ENCODE measurements at regions of chr22 and their contacts with region 1.

Region 1: GRCh38 chr22:46178760-46179505 is 28.6 kb downstream of the PPARA start:
- DNase-seq: no peak
- ATAC-seq: 0 out of 2 replicates have a peak, but pooled peaks have one; percentile 19
- H3K4me3 ChIP-seq: no peak overlapping the region
- H3K27ac ChIP-seq: no peak overlapping the region
- H3K4me1 ChIP-seq: peaks cover 5% of the 10 kb centered on the region
- H3K27me3 ChIP-seq: no peaks in the 10 kb centered on the region
- CTCF ChIP-seq: no peak
- POLR2A ChIP-seq: no peak
- RAD21 ChIP-seq: no peak

Region 2: GRCh38 chr22:45816776-45817175 is 362.2 kb before region 1 on chr22:
- CTCF ChIA-PET with region 1: no interaction called
- POLR2A ChIA-PET with region 1: interaction called, 14 read pairs
- dilution Hi-C with region 1: no loop called
- in situ Hi-C with region 1: no loop called
- intact Hi-C with region 1: no loop called
- DNase-seq: no peak
- ATAC-seq: no peak
- H3K4me3 ChIP-seq: no peak overlapping the region
- H3K27ac ChIP-seq: no peak overlapping the region
- H3K4me1 ChIP-seq: peaks cover 6% of the 10 kb centered on the region; the same call in 1 of the 2 replicates
- H3K27me3 ChIP-seq: no peaks in the 10 kb centered on the region
- CTCF ChIP-seq: no peak
- POLR2A ChIP-seq: no peak
- RAD21 ChIP-seq: no peak

Region 3: DNA sequence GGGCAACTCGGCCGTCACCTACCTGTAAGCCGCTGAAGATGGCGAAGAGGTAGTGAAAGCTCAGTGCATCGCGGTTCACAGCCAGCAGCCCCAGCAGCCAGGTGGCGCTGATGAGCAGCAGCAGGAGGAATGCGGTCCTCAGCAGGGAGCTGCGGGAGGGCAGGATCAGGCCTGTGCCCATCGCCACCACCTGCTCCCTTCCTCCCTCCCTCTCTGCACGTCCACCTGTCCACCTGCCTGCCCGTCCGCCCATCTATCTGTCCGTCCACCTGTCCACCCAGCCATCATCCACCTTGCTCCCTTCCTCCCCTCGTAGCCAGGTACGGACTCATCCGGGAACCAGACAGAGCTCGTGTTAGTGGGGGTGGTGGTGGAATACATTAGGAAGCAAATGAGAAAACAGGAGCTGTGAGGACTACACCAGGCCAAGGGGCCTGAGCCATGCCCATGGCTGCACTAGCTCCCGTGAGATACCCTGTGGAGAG is 188.8 kb after region 1 on chr22:
- CTCF ChIA-PET with region 1: no interaction called
- POLR2A ChIA-PET with region 1: no interaction called
- dilution Hi-C with region 1: no loop called
- in situ Hi-C with region 1: no loop called
- intact Hi-C with region 1: no loop called
- DNase-seq: peak; percentile 40
- ATAC-seq: peak; percentile 93
- H3K4me3 ChIP-seq: no peak overlapping the region
- H3K27ac ChIP-seq: no peak overlapping the region
- H3K4me1 ChIP-seq: no peaks in the 10 kb centered on the region
- H3K27me3 ChIP-seq: peaks cover 13% of the 10 kb centered on the region; the same call in 1 of the 2 replicates
- CTCF ChIP-seq: peak; percentile 87
- POLR2A ChIP-seq: no peak
- RAD21 ChIP-seq: peak; percentile 77

Measured in IMR-90 (cell line).